ENCODE measurements at regions of chr19 and their contacts with region 1.

Region 1: GRCh38 chr19:55461259-55461973 is at the start of gene ISOC2:
- DNase-seq: peak; percentile 100
- H3K4me3 ChIP-seq: peak within 1 kb of the TSS; percentile 39 to 95 (median 70)
- H3K27ac ChIP-seq: peak within 1 kb of the TSS; percentile 63
- H3K4me1 ChIP-seq: peaks cover 13% of the 10 kb centered on the region
- H3K27me3 ChIP-seq: no peaks in the 10 kb centered on the region
- CTCF ChIP-seq: no peak
- POLR2A ChIP-seq: no peak
- total RNA-seq, gene ISOC2: 43.6 and 49.3 TPM in 2 replicates

Region 2: DNA sequence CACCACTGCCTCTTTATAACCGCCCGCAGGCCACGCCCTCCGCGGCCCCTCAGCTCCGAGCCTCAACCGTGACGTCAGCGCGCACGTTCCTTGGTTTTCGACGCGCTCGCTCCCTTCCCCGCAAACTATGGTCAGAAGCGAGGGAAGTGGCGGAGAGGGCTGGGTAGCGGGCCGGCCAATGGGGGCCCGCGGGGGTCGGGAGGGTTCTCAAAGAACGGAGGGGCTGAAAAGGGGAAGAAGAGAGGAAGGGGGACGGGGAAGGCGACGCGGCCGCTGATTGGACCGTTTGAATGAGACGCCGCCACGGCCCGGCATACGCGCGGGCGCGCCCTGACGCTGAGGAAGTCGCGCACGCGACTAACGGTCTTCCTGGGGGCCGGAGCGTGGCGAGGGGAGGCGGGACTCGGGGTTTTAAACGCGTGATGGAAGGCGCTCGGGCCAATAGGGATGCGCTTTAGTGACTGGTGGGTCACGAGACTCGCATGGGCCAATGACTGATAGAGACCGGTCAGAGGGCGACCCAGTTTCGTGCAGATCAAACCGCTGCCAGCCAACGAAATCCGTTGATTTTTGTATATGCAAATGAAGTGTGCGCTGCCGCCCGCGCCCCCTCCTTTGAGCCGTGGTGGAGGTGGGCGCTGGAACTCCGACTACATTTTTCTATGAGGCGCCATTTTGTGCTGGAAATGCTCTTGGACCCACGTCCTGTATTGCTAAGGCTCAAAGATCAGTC is 53.5 kb before region 1 on chr19:
- CTCF ChIA-PET with region 1: no interaction called
- POLR2A ChIA-PET with region 1: interaction called, 4 read pairs
- dilution Hi-C with region 1: no loop called
- intact Hi-C with region 1: loop called (anchors 2 kb)
- DNase-seq: peak; percentile 100
- H3K4me3 ChIP-seq: peak overlapping the region in 2 of 3 experiments; percentile 28 to 90
- H3K27ac ChIP-seq: peak overlapping the region; percentile 90
- H3K4me1 ChIP-seq: peaks cover 13% of the 10 kb centered on the region
- H3K27me3 ChIP-seq: peaks cover 2 to 5% of the 10 kb centered on the region in 2 experiments
- CTCF ChIP-seq: no peak
- POLR2A ChIP-seq: peak; percentile 58

Region 3: GRCh38 chr19:55476100-55476775 is 14.8 kb after region 1 on chr19 and contains the start of gene ZNF628:
- CTCF ChIA-PET with region 1: interaction called, 33 read pairs
- POLR2A ChIA-PET with region 1: interaction called, 5 read pairs
- dilution Hi-C with region 1: no loop called
- intact Hi-C with region 1: loop called (anchors 1 kb)
- DNase-seq: peak; percentile 97
- H3K4me3 ChIP-seq: peak within 1 kb of the TSS; percentile 63 to 95 (median 95)
- H3K27ac ChIP-seq: peak within 1 kb of the TSS; percentile 66
- H3K4me1 ChIP-seq: peaks cover 10% of the 10 kb centered on the region
- H3K27me3 ChIP-seq: no peaks in the 10 kb centered on the region
- CTCF ChIP-seq: no peak
- POLR2A ChIP-seq: peak; percentile 28
- total RNA-seq, gene ZNF628: 9.0 and 10.4 TPM in 2 replicates

Region 4: GRCh38 chr19:55624109-55625003 is 162.9 kb after region 1 on chr19 and contains the start of gene ZNF784:
- CTCF ChIA-PET with region 1: interaction called, 15 read pairs
- POLR2A ChIA-PET with region 1: no interaction called
- dilution Hi-C with region 1: no loop called
- intact Hi-C with region 1: loop called (anchors 1 kb)
- DNase-seq: peak; percentile 92
- H3K4me3 ChIP-seq: peak within 1 kb of the TSS; percentile 58 to 78 (median 74)
- H3K27ac ChIP-seq: peak within 1 kb of the TSS; percentile 54
- H3K4me1 ChIP-seq: peaks cover 6% of the 10 kb centered on the region
- H3K27me3 ChIP-seq: no peaks in the 10 kb centered on the region
- CTCF ChIP-seq: no peak
- POLR2A ChIP-seq: peak; percentile 80
- total RNA-seq, gene ZNF784: 4.9 and 7.1 TPM in 2 replicates

Measured in endothelial cell of umbilical vein (primary cell).